ENCODE measurements at regions of chr1 and their contacts with region 1.

Region 1: GRCh38 chr1:48202030-48202752 is 20.3 kb upstream of the SLC5A9 start:
- DNase-seq: peak; percentile 77
- H3K4me3 ChIP-seq: no peak overlapping the region
- H3K27ac ChIP-seq: no peak overlapping the region
- H3K4me1 ChIP-seq: no peaks in the 10 kb centered on the region
- H3K27me3 ChIP-seq: no peaks in the 10 kb centered on the region
- CTCF ChIP-seq: peak; percentile 21 to 83 (median 64)
- EP300 ChIP-seq: no peak
- POLR2A ChIP-seq: no peak

Region 2: DNA sequence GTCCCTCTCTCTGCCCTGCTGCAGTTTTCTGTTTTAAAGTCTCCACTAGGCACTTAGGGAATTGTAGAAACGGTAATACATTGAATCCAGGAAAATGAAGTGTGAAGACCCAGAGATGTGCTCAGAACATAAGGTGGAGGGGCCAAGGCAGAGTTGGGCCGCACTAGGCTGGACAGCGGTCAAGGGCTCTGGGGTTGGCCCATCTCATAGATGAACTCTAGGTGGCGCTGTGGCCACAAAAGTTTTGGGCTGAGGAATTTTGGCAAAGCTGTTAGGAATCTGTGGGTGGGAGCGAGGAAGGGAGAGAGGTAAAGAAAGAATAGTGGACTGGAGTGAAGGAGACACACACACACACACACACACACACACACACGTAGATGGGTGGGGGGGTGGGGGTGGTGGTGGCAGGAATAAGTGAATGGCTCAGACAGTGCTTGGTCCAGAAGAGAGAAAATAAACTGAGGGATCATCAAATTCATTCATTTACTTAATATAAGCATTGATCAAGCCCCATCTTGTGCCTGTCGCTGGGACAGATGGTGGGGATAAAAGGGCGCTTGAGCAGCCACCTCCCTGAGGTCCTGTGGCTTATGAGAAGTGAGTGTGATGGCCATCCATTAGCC is 463.5 kb before region 1 on chr1:
- intact Hi-C with region 1: loop called (anchors 5 kb)
- DNase-seq: no peak
- H3K4me3 ChIP-seq: no peak overlapping the region
- H3K27ac ChIP-seq: no peak overlapping the region
- H3K4me1 ChIP-seq: no peaks in the 10 kb centered on the region
- H3K27me3 ChIP-seq: peaks cover 0 to 18% (median 3%) of the 10 kb centered on the region in 3 donors
- CTCF ChIP-seq: peak; percentile 27 to 75 (median 52)
- EP300 ChIP-seq: no peak
- POLR2A ChIP-seq: no peak

Region 3: DNA sequence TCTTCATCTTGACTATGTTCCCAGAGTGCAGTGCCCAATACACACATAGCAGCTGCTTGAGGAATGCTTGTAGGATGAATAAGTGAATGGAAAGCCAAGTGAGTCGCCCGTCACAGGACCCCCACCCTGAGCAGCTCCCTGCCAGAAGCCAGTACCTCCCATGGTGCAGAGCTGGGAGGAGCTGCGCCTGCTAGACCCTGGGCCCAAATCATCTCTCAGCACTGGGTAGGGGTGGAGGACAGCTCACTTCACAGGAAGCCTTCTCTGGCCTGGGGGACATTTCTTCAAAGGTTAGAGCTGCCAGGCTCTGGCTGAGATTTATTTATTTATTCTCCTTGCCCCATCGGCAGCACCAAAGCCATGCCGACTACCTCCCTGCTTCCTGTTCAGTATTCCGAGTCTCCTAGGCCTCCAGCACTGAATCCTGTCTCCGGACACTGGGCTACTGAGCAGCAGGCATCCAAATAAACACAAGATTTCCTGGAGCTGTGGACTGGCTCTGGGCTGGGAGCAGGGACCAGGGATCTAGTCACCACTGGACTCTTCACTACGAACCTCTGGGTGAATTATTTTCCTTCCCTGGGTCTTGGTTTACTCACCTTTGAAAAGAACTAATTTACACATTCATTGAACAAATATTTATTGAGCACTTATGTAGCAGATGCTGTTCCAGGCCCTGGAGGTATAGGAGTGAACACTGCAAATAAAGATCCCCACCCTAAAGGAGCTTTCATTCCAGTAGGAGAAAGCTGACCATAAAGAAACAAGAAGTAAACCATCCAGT is 392.7 kb before region 1 on chr1:
- intact Hi-C with region 1: no loop called
- DNase-seq: no peak
- H3K4me3 ChIP-seq: no peak overlapping the region
- H3K27ac ChIP-seq: no peak overlapping the region
- H3K4me1 ChIP-seq: peaks cover 0 to 12% (median 8%) of the 10 kb centered on the region in 4 donors
- H3K27me3 ChIP-seq: no peaks in the 10 kb centered on the region
- CTCF ChIP-seq: no peak
- EP300 ChIP-seq: no peak
- POLR2A ChIP-seq: no peak

Region 4: GRCh38 chr1:47997289-47998200 is 204.6 kb before region 1 on chr1 and contains the start of gene TRABD2B:
- intact Hi-C with region 1: loop called (anchors 2 kb)
- DNase-seq: peak; percentile 87
- H3K4me3 ChIP-seq: peak within 1 kb of the TSS; percentile 49 to 77 (median 62)
- H3K27ac ChIP-seq: peak within 1 kb of the TSS; percentile 76 to 88 (median 78)
- H3K4me1 ChIP-seq: peaks cover 0 to 17% (median 12%) of the 10 kb centered on the region in 4 donors
- H3K27me3 ChIP-seq: peaks cover 4 to 32% (median 25%) of the 10 kb centered on the region in 3 donors
- CTCF ChIP-seq: peak; percentile 80 to 96 (median 87)
- EP300 ChIP-seq: no peak
- POLR2A ChIP-seq: no peak
- total RNA-seq, gene TRABD2B: 0.66 to 1.4 (median 1.0) TPM

Region 5: DNA sequence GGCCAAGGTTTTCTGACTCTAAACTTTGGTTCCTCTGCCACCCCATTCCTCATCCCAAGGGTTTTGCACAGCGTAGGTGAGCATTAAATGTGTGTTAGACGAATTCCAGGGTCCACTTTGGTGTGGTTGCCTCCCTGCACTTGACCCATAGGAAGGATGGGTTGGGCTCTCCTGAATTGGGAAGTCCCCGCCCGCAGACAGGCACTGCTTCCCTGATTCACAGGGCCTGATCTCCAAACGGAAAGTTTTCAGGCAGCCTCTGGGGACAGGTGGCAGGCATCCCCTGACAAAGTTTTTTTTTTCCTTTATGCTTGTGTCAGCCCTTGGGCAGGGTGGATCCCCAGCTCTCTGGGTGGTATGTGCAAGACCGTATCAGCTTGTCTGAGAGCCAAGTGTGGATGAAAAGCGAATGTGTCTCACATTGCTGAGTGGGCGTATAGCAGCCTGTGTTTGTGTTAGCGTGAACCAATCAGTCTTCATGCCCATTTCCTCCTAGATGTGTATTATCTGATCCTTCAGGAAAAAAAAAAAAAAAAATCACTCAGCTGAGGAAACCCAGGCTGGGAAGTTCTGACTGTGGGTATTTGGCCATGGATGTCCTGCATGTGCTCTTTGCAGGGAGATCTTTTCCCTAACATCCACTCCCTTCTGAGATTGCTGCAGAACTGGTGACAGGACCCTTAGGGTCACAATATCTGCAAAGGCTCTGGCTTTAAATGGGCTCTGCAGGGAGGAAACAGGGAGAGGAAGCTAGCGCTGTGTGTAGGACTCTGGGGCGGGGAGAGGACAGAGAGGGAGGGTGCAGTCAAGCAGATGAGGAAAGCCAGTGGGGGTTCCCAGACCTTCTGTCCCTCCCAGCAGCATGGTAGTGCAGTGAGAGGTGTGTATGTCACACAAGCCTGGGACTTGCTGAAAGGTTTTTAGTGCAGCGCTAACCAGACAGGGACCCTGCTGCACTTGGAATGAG is 162.8 kb before region 1 on chr1:
- intact Hi-C with region 1: no loop called
- DNase-seq: no peak
- H3K4me3 ChIP-seq: no peak overlapping the region
- H3K27ac ChIP-seq: no peak overlapping the region
- H3K4me1 ChIP-seq: peaks cover 0 to 11% (median 0%) of the 10 kb centered on the region in 4 donors
- H3K27me3 ChIP-seq: peaks cover 0 to 4% (median 0%) of the 10 kb centered on the region in 3 donors
- CTCF ChIP-seq: no peak
- EP300 ChIP-seq: no peak
- POLR2A ChIP-seq: no peak

Region 6: DNA sequence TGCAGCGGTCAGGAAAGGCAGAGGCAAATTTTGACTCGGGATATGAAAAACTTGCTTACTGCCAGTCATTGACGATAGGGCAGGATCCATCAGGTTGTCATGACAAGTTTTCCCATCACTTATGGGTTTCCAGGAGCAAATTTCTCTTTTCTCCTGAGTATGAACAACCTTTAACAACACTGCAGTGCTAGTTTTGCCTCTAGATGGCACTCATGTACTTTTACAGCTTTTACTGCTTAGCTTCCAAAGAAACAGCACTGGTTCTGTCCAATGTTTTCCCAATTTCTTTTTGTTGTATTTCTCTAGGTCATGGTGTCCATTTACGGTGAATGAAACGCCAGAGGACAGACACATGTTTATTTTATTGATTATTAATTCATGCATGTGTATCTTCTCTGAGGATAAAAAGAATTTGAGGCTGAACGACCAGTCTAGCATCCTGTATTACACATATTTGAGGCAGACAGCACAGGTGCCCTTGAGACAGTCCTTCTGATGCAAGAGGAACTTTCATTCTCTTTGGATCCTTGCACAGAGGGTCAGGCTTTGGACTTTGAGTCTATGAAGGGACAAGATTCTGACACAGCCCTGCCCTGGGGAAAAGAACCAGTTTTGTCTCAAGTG is 92.7 kb before region 1 on chr1:
- intact Hi-C with region 1: loop called (anchors 2 kb)
- DNase-seq: no peak
- H3K4me3 ChIP-seq: no peak overlapping the region
- H3K27ac ChIP-seq: no peak overlapping the region
- H3K4me1 ChIP-seq: no peaks in the 10 kb centered on the region
- H3K27me3 ChIP-seq: no peaks in the 10 kb centered on the region
- CTCF ChIP-seq: peak; percentile 15 to 76 (median 63)
- EP300 ChIP-seq: no peak
- POLR2A ChIP-seq: no peak

Region 7: DNA sequence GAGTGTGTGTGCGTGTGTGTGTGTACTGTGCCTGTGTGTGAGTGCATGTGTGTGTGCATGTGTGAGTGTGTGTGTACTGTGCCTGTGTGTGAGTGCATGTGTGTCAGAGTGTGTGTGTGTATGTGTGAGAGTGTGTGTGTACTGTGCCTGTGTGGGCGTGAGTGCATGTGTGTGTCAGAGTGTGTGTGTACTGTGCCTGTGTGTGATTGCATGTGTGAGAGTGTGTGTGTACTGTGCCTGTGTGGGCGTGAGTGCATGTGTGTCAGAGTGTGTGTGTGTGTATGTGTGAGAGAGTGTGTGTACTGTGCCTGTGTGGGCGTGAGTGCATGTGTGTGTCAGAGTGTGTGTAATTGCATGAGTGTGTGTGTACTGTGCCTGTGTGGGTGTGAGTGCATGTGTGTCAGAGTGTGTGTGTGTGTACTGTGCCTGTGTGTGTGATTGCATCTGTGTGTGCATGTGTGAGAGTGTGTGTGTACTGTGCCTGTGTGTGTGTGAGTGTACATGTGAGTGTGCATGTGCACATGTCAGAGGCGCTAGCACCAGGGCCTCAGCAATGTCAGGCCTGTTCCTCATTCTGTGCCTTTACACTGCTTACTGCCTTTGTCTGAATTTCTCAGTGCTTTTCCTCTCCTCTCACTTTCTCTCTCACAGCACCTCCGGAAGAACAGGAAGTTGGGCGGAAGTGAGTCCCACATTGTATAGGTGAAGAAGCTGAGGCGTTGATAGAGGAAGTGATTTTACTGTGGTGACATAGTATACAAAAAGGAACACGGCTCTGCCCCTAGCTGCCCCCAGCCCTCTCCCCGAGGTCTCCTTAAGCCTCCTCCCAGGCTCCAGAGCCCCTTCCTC is 25.2 kb after region 1 on chr1:
- intact Hi-C with region 1: no loop called
- DNase-seq: no peak
- H3K4me3 ChIP-seq: no peak overlapping the region
- H3K27ac ChIP-seq: no peak overlapping the region
- H3K4me1 ChIP-seq: no peaks in the 10 kb centered on the region
- H3K27me3 ChIP-seq: peaks cover 0 to 14% (median 3%) of the 10 kb centered on the region in 3 donors
- CTCF ChIP-seq: no peak
- EP300 ChIP-seq: no peak
- POLR2A ChIP-seq: no peak

Measured in sigmoid colon (tissue), 7 donors.